Caco-2 (cell line): ENCODE measurements at regions of chr1 and their contacts with region 1.

Region 1: DNA sequence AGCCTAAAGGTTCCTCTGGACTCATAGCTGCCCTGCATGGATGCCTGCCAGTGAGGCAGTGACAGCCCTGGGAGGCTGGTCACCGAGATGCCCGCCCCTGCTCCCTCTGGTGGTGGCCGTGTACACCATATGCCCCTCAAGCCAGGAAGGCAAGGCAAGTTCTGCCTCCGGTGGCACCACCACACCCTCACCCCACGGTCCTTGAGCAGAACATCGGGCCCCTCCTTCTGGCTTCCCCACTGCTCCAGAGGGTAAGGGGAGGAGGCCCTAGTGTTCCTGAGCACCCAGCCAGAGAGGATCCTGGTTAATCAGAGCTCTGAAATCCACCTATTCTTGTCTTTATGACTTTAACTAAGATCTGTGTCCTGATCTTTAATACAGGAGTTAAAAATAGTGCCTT is 1.6 kb upstream of the S100A14 start:
- DNase-seq: peak; percentile 88 to 91
- H3K4me3 ChIP-seq: no peak overlapping the region
- H3K4me3 Mint-ChIP-seq: peak overlapping the region; percentile 74
- H3K27ac Mint-ChIP-seq: peak overlapping the region; percentile 96
- H3K4me1 ChIP-seq: peaks cover 34% of the 10 kb centered on the region
- H3K4me1 Mint-ChIP-seq: peaks cover 32% of the 10 kb centered on the region
- H3K27me3 ChIP-seq: no peaks in the 10 kb centered on the region
- H3K27me3 Mint-ChIP-seq: no peaks in the 10 kb centered on the region
- CTCF ChIP-seq: peak; percentile 80 to 84

Region 2: GRCh38 chr1:153577624-153578051 is 40.0 kb before region 1 on chr1:
- CTCF ChIA-PET with region 1: interaction called, 25 read pairs
- POLR2A ChIA-PET with region 1: interaction called, 25 read pairs
- intact Hi-C with region 1: loop called (anchors 1 kb)
- DNase-seq: peak; percentile 52 to 76
- H3K4me3 ChIP-seq: no peak overlapping the region
- H3K4me3 Mint-ChIP-seq: peak overlapping the region; percentile 16
- H3K27ac Mint-ChIP-seq: peak overlapping the region; percentile 73
- H3K4me1 ChIP-seq: peaks cover 62% of the 10 kb centered on the region
- H3K4me1 Mint-ChIP-seq: peaks cover 45% of the 10 kb centered on the region
- H3K27me3 ChIP-seq: no peaks in the 10 kb centered on the region
- H3K27me3 Mint-ChIP-seq: no peaks in the 10 kb centered on the region
- CTCF ChIP-seq: no peak

Region 3: DNA sequence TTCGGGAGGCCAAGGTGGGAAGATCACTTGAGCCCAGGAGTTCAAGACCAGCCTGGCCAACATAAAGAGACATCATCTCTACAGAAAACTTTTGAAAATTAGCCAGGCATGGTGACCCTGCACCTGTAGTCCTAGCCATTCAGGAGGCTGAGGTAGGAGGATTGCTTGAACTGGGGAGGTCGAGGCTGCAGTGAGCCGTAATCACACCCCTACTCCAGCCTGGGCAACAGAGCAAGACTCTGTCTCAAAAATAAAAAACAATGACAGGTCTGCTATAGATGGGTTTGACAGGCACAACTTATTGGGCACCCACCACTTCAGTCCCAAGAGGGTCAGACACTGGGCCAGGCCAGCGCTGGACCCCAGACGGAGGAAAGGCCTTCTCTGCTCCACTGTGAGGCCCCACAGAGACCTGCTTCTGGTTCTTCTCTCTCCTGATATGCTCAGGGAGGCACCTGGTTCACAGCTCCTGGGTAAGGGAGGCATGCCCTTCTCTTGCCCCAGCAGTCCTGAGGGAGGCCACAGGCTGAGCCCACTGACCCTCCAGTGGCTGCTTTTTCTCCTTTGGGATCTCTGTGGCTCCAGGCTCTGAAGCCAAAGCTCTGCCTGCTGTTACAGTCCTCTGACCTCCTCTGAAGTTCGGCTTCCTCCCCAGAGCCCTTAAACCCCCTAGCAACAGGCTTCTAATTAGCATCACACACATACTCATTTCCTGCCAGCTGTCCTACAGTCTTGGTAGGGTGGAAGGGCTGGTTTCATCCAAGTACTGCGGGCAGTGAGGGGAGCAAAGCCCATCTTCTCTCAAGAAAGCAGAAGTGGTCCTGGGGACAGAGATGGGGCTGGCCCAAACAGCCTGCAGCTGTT is 19.1 kb before region 1 on chr1:
- CTCF ChIA-PET with region 1: no interaction called
- POLR2A ChIA-PET with region 1: interaction called, 4 read pairs
- intact Hi-C with region 1: loop called (anchors 2 kb)
- DNase-seq: no peak
- H3K4me3 ChIP-seq: no peak overlapping the region
- H3K4me3 Mint-ChIP-seq: no peak overlapping the region
- H3K27ac Mint-ChIP-seq: no peak overlapping the region
- H3K4me1 ChIP-seq: no peaks in the 10 kb centered on the region
- H3K4me1 Mint-ChIP-seq: no peaks in the 10 kb centered on the region
- H3K27me3 ChIP-seq: no peaks in the 10 kb centered on the region
- H3K27me3 Mint-ChIP-seq: no peaks in the 10 kb centered on the region
- CTCF ChIP-seq: no peak

Region 4: GRCh38 chr1:153633716-153634665 is 16.3 kb after region 1 on chr1 and contains the start of gene CHTOP:
- CTCF ChIA-PET with region 1: interaction called, 16 read pairs
- POLR2A ChIA-PET with region 1: interaction called, 29 read pairs
- intact Hi-C with region 1: no loop called
- DNase-seq: peak; percentile 95 to 97
- H3K4me3 ChIP-seq: peak within 1 kb of the TSS; percentile 84
- H3K4me3 Mint-ChIP-seq: peak within 1 kb of the TSS; percentile 98
- H3K27ac Mint-ChIP-seq: peak within 1 kb of the TSS; percentile 99
- H3K4me1 ChIP-seq: peaks cover 26% of the 10 kb centered on the region
- H3K4me1 Mint-ChIP-seq: peaks cover 33% of the 10 kb centered on the region
- H3K27me3 ChIP-seq: no peaks in the 10 kb centered on the region
- H3K27me3 Mint-ChIP-seq: no peaks in the 10 kb centered on the region
- CTCF ChIP-seq: no peak
- total RNA-seq, gene CHTOP: 85.1 and 90.6 TPM in 2 replicates

Region 5: GRCh38 chr1:153658400-153659174 is 40.9 kb after region 1 on chr1 and contains the start of gene SNAPIN:
- CTCF ChIA-PET with region 1: no interaction called
- POLR2A ChIA-PET with region 1: interaction called, 19 read pairs
- intact Hi-C with region 1: no loop called
- DNase-seq: peak; percentile 93 to 95
- H3K4me3 ChIP-seq: peak within 1 kb of the TSS; percentile 70
- H3K4me3 Mint-ChIP-seq: peak within 1 kb of the TSS; percentile 97
- H3K27ac Mint-ChIP-seq: peak within 1 kb of the TSS; percentile 91
- H3K4me1 ChIP-seq: peaks cover 22% of the 10 kb centered on the region
- H3K4me1 Mint-ChIP-seq: peaks cover 16% of the 10 kb centered on the region
- H3K27me3 ChIP-seq: no peaks in the 10 kb centered on the region
- H3K27me3 Mint-ChIP-seq: no peaks in the 10 kb centered on the region
- CTCF ChIP-seq: no peak
- total RNA-seq, gene SNAPIN: 32.8 and 34.1 TPM in 2 replicates

Region 6: DNA sequence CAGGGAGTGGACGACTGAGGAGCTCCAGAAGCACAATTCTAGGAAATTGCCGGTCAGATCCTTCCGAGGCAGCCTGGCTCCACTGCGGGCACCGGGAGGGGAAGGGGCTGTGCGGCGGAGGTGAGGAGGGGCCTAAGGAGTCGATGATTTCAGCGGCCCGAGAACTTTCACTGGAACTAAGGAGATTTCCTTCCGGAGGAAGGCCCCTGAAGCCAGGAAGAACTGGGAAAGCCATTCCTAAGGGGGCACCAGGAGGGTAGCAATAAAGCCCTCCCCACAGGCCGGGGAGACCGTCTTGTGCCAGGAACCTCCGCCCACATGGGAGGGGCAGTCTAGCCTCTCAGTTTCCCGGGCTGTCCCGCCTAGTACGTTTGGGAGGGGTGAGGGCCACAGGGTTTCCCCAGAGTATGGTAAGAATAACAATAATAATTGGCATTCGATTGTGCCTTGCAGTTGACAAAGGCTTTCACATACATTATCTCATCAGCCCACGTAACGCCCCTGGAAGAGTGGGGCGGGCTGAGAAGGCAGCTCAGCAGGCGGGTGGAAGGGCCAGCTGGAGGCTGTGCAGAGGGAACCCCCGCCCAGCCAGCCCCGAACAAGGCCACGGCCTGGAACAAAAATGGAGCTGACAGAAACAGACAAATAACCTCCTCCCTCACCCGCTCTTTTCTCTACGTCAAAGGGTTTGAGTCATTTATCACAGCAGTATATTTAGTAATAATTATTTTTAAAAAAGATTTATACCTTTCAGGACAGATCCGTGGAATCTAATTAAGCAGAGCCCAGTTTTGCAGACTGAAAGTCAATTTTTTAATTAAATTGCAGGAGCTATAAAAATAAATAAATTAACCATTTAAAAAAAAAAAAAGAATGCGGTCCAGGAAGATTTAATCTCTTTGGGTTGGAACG is 80.6 kb after region 1 on chr1:
- CTCF ChIA-PET with region 1: no interaction called
- POLR2A ChIA-PET with region 1: no interaction called
- intact Hi-C with region 1: no loop called
- DNase-seq: no peak
- H3K4me3 ChIP-seq: no peak overlapping the region
- H3K4me3 Mint-ChIP-seq: no peak overlapping the region
- H3K27ac Mint-ChIP-seq: no peak overlapping the region
- H3K4me1 ChIP-seq: peaks cover 13% of the 10 kb centered on the region
- H3K4me1 Mint-ChIP-seq: peaks cover 10% of the 10 kb centered on the region
- H3K27me3 ChIP-seq: no peaks in the 10 kb centered on the region
- H3K27me3 Mint-ChIP-seq: no peaks in the 10 kb centered on the region
- CTCF ChIP-seq: no peak